Caco-2 (cell line): ENCODE measurements at regions of chr9 and their contacts with region 1.

Region 1: DNA sequence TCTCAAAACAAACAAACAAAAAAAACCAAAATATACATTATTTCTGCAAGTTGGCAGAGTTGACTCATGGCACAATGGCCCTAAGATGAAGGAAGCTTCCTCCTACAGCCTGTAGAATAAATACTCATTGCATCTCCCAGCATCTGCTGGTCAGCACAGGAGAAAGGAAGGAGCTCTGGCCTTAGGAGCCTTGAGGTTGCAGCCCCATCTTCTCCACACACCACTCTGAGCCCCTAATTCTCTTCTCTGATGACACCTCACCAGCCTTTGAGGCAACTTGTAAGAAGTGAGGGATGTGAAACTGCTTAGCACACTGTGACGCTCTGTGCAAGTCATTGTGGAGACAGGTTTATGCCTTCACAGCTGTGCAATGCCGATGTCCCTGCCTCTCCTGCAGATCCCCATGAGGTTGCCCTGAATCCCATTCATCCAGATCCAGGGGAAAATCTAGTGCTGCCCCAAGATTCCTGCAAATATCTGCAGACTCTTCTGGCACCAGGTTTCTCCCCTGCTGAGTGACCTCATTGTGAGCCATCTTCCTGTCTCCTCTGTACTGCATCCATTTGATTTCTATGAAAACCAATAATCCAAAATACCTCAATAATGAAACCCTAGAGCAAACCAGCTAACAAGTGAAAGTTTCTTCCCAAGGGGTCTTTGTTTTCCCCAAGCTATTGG is 65.3 kb upstream of the TGFBR1 start:
- DNase-seq: no peak
- H3K4me3 ChIP-seq: no peak overlapping the region
- H3K4me3 Mint-ChIP-seq: no peak overlapping the region
- H3K27ac Mint-ChIP-seq: no peak overlapping the region
- H3K4me1 ChIP-seq: no peaks in the 10 kb centered on the region
- H3K4me1 Mint-ChIP-seq: peaks cover 7% of the 10 kb centered on the region
- H3K27me3 ChIP-seq: no peaks in the 10 kb centered on the region
- H3K27me3 Mint-ChIP-seq: peaks cover 26% of the 10 kb centered on the region
- CTCF ChIP-seq: no peak

Region 2: GRCh38 chr9:99130069-99130468 is 90.4 kb after region 1 on chr9:
- CTCF ChIA-PET with region 1: no interaction called
- POLR2A ChIA-PET with region 1: interaction called, 14 read pairs
- intact Hi-C with region 1: no loop called
- DNase-seq: no peak
- H3K4me3 ChIP-seq: no peak overlapping the region
- H3K4me3 Mint-ChIP-seq: no peak overlapping the region
- H3K27ac Mint-ChIP-seq: no peak overlapping the region
- H3K4me1 ChIP-seq: peaks cover 3% of the 10 kb centered on the region; the same call in 1 of the 2 replicates
- H3K4me1 Mint-ChIP-seq: no peaks in the 10 kb centered on the region
- H3K27me3 ChIP-seq: no peaks in the 10 kb centered on the region
- H3K27me3 Mint-ChIP-seq: no peaks in the 10 kb centered on the region
- CTCF ChIP-seq: no peak